ENCODE measurements at regions of chr22 and their contacts with region 1.

Region 1: DNA sequence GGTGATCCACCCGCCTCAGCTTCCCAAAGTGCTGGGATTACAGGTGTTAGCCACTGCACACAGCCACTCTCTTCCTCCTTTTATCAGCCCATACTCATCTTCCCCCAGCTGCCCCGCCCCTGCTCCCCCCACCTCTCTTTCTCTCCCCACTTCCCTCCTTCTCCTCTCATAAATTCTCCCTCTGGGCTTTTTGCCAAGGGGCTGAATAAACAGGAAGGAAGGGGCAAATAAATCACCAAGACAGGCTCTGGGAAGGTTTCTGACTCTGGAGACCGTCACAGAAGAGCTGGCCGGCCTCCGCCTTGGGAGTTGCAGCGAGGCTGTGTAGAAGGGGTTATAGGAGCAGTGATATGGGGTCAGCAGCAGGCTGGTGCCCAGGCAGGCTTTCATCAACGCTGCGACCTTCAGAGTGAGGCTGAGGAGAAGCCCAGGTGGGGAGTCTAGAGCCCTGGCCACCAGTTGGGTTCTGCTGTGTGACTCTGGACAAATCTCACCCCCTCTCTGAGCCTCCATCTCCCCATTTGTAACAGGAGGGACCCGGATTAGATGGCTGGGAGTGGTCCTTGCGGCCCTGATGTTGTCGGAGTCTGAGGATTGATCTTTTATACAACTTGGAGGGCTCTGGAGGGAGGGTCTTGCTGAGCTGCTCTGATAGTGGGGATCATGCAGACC is 62.6 kb upstream of the RASD2 start:
- DNase-seq: peak; percentile 96
- ATAC-seq: peak; percentile 83
- H3K4me3 ChIP-seq: no peak overlapping the region
- H3K27ac ChIP-seq: 0 out of 2 replicates have a peak overlapping the region, but pooled peaks have one; percentile 21
- H3K4me1 ChIP-seq: peaks cover 36% of the 10 kb centered on the region
- H3K27me3 ChIP-seq: no peaks in the 10 kb centered on the region
- CTCF ChIP-seq: no peak

Region 2: DNA sequence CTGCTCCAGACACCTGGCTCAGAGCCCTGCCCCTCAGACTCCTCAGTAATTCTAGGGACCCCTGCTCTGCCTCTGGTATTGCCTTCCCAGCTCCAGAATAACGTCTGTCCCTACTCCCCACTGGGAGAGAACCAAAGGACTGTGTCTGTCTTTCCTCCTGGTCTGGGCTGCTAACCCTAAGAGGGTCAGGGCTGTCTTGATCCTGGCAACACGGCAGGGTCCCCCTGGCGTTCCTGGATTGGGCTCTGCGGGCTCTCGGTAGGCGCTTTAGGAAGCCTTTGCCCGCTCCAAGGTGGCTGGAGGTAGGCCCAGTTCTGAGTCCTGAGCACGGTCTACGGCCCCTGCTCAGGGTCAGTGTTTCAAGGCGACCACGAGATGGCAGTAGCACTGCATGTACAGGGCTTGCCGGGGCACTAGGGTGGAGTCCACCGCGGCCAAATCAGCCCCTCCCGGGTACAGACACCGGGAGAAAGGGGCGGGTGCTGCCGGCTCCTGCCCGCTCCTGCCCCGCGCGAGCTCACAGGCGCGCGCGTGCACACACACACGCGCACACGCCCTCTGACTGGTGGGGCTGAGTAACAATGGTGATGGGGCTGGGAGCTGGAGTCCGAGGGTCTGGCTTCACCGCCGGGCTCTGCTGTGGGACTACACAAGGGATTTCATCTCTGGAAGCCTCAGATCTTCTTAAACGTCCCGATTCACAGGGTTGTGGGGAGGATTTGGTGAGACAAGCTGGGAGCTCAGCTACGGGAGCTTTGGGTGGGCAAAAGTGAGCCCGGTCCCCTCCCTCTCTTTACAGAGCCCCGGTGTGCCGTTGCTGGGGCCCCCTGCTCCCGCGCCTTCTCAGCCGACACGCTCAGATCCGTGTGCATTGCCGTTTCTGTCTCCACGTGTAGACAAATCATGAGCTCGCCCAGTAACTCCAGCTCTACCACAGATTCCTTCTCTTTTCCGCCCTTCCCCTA is 127.2 kb before region 1 on chr22:
- CTCF ChIA-PET with region 1: interaction called, 11 read pairs
- POLR2A ChIA-PET with region 1: no interaction called
- intact Hi-C with region 1: no loop called
- DNase-seq: peak; percentile 81
- ATAC-seq: peak; percentile 95
- H3K4me3 ChIP-seq: peak overlapping the region; percentile 70
- H3K27ac ChIP-seq: peak overlapping the region; percentile 52
- H3K4me1 ChIP-seq: peaks cover 11% of the 10 kb centered on the region
- H3K27me3 ChIP-seq: no peaks in the 10 kb centered on the region
- CTCF ChIP-seq: peak; percentile 69

Region 3: GRCh38 chr22:36028646-36029405 is 550.8 kb after region 1 on chr22 and contains the start of gene RBFOX2:
- CTCF ChIA-PET with region 1: no interaction called
- POLR2A ChIA-PET with region 1: interaction called, 11 read pairs
- intact Hi-C with region 1: no loop called
- DNase-seq: peak; percentile 91
- ATAC-seq: peak; percentile 88
- H3K4me3 ChIP-seq: peak within 1 kb of the TSS; percentile 99
- H3K27ac ChIP-seq: no peak within 1 kb of the TSS
- H3K4me1 ChIP-seq: 0 out of 2 replicates have a peak, but pooled peaks cover 13% of the 10 kb centered on the region
- H3K27me3 ChIP-seq: no peaks in the 10 kb centered on the region
- CTCF ChIP-seq: no peak
- total RNA-seq, gene RBFOX2: 75.1 and 82.5 TPM in 2 replicates